ENCODE measurements at regions of chr10 and their contacts with region 1.

Region 1: GRCh38 chr10:117653170-117653515 is 110.6 kb downstream of the EMX2 start:
- DNase-seq: peak; percentile 98
- ATAC-seq: peak; percentile 87
- H3K4me3 ChIP-seq: no peak overlapping the region
- H3K27ac ChIP-seq: peak overlapping the region; percentile 75
- H3K4me1 ChIP-seq: peaks cover 46% of the 10 kb centered on the region
- H3K27me3 ChIP-seq: no peaks in the 10 kb centered on the region
- CTCF ChIP-seq: no peak
- EP300 ChIP-seq: peak; percentile 99
- POLR2A ChIP-seq: no peak
- RAD21 ChIP-seq: peak; percentile 17; the same call in 1 of the 2 replicates

Region 2: GRCh38 chr10:117552156-117552631 is 100.9 kb before region 1 on chr10:
- CTCF ChIA-PET with region 1: no interaction called
- POLR2A ChIA-PET with region 1: no interaction called
- RAD21 ChIA-PET with region 1: interaction called, 14 read pairs
- SMC1A ChIA-PET with region 1: interaction called, 7 read pairs
- in situ Hi-C with region 1: no loop called
- intact Hi-C with region 1: loop called (anchors 10 kb)
- DNase-seq: no peak
- ATAC-seq: no peak
- H3K4me3 ChIP-seq: no peak overlapping the region
- H3K27ac ChIP-seq: no peak overlapping the region
- H3K4me1 ChIP-seq: no peaks in the 10 kb centered on the region
- H3K27me3 ChIP-seq: peaks cover 24 to 26% of the 10 kb centered on the region in 2 experiments
- CTCF ChIP-seq: no peak
- EP300 ChIP-seq: no peak
- POLR2A ChIP-seq: no peak
- RAD21 ChIP-seq: no peak

Region 3: GRCh38 chr10:117631276-117632145 is 21.6 kb before region 1 on chr10:
- CTCF ChIA-PET with region 1: interaction called, 4 read pairs
- POLR2A ChIA-PET with region 1: no interaction called
- RAD21 ChIA-PET with region 1: interaction called, 3 read pairs
- SMC1A ChIA-PET with region 1: interaction called, 44 read pairs
- in situ Hi-C with region 1: no loop called
- intact Hi-C with region 1: no loop called
- DNase-seq: no peak
- ATAC-seq: no peak
- H3K4me3 ChIP-seq: no peak overlapping the region
- H3K27ac ChIP-seq: no peak overlapping the region
- H3K4me1 ChIP-seq: no peaks in the 10 kb centered on the region
- H3K27me3 ChIP-seq: no peaks in the 10 kb centered on the region
- CTCF ChIP-seq: no peak
- EP300 ChIP-seq: no peak
- POLR2A ChIP-seq: no peak
- RAD21 ChIP-seq: no peak

Region 4: GRCh38 chr10:117663750-117664149 is 10.6 kb after region 1 on chr10:
- CTCF ChIA-PET with region 1: interaction called, 23 read pairs
- POLR2A ChIA-PET with region 1: interaction called, 6 read pairs
- RAD21 ChIA-PET with region 1: interaction called, 64 read pairs
- SMC1A ChIA-PET with region 1: interaction called, 97 read pairs
- in situ Hi-C with region 1: no loop called
- intact Hi-C with region 1: loop called (anchors 1 kb)
- DNase-seq: peak; percentile 83
- ATAC-seq: peak; percentile 99
- H3K4me3 ChIP-seq: no peak overlapping the region
- H3K27ac ChIP-seq: no peak overlapping the region; the same call in 1 of the 2 replicates
- H3K4me1 ChIP-seq: peaks cover 8% of the 10 kb centered on the region
- H3K27me3 ChIP-seq: no peaks in the 10 kb centered on the region
- CTCF ChIP-seq: no peak
- EP300 ChIP-seq: peak; percentile 89 to 99
- POLR2A ChIP-seq: no peak
- RAD21 ChIP-seq: peak; percentile 18; the same call in 1 of the 2 replicates

Region 5: DNA sequence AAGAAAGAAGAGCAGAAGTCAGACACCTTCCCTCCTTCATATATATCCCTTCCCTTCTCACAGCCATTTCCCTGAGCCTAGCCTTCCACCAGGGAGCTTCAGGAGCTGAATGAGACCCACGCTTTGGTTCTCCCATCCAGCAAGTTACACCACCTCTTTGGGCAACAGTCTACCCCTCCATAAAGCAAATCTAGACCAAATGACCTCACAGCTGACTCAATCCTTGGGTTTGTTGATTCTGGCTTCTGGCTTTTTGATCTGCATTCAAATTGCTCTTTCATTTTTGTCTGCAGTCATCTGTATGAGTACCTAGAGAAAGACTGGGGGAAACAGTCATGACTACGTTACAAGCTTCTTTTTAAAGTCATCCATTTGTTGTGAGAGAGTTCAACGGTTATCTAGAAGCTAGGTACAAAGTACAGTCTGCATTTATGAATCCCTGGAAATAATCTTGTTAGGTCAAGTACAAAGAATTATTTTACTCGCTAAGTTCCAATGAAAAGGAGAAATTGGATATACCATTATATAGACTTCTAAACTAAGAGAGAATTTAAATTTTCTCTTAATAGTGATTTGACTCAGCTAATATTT is 307.3 kb after region 1 on chr10:
- CTCF ChIA-PET with region 1: no interaction called
- POLR2A ChIA-PET with region 1: no interaction called
- RAD21 ChIA-PET with region 1: no interaction called
- SMC1A ChIA-PET with region 1: no interaction called
- in situ Hi-C with region 1: no loop called
- intact Hi-C with region 1: no loop called
- DNase-seq: no peak
- ATAC-seq: no peak
- H3K4me3 ChIP-seq: no peak overlapping the region
- H3K27ac ChIP-seq: no peak overlapping the region
- H3K4me1 ChIP-seq: no peaks in the 10 kb centered on the region
- H3K27me3 ChIP-seq: peaks cover 1 to 11% of the 10 kb centered on the region in 2 experiments; a peak in 3 of 4 replicates
- CTCF ChIP-seq: no peak
- EP300 ChIP-seq: no peak
- POLR2A ChIP-seq: no peak
- RAD21 ChIP-seq: no peak